Caco-2 (cell line): ENCODE measurements at regions of chr11 and their contacts with region 1.

Region 1: DNA sequence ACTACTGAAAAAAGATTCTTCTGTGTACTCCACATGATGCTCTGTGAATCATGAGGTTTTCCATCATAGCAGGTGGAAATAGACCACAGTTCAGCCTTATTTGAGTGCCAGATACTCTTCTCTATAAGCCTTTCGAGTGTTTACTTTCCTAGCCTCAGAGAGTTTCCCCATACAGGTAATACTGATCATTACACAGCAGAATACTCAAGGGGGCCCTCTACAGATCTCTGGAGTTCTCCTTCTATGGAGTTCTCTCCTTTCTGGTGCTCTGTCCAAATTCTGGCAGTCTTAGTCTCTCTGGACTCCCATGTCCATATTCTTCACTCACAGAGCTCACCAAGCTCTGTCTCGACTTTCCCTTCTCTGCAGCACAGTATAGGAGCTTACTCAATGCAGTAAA is 175.7 kb upstream of the CARD18 start:
- DNase-seq: peak in 1 of 2 experiments; percentile 39
- H3K4me3 ChIP-seq: no peak overlapping the region
- H3K4me3 Mint-ChIP-seq: no peak overlapping the region
- H3K27ac Mint-ChIP-seq: no peak overlapping the region
- H3K4me1 ChIP-seq: no peaks in the 10 kb centered on the region
- H3K4me1 Mint-ChIP-seq: no peaks in the 10 kb centered on the region
- H3K27me3 ChIP-seq: no peaks in the 10 kb centered on the region
- H3K27me3 Mint-ChIP-seq: no peaks in the 10 kb centered on the region
- CTCF ChIP-seq: peak in 1 of 2 experiments; percentile 58

Region 2: GRCh38 chr11:104946907-104947306 is 368.4 kb before region 1 on chr11:
- CTCF ChIA-PET with region 1: no interaction called
- POLR2A ChIA-PET with region 1: no interaction called
- intact Hi-C with region 1: loop called (anchors 1 kb)
- DNase-seq: peak in 1 of 2 experiments; percentile 72
- H3K4me3 ChIP-seq: no peak overlapping the region
- H3K4me3 Mint-ChIP-seq: no peak overlapping the region
- H3K27ac Mint-ChIP-seq: no peak overlapping the region
- H3K4me1 ChIP-seq: no peaks in the 10 kb centered on the region
- H3K4me1 Mint-ChIP-seq: peaks cover 6% of the 10 kb centered on the region
- H3K27me3 ChIP-seq: no peaks in the 10 kb centered on the region
- H3K27me3 Mint-ChIP-seq: no peaks in the 10 kb centered on the region
- CTCF ChIP-seq: peak; percentile 54 to 74

Region 3: GRCh38 chr11:105334025-105334710 is 18.9 kb after region 1 on chr11:
- CTCF ChIA-PET with region 1: no interaction called
- POLR2A ChIA-PET with region 1: no interaction called
- intact Hi-C with region 1: no loop called
- DNase-seq: no peak
- H3K4me3 ChIP-seq: no peak overlapping the region
- H3K4me3 Mint-ChIP-seq: no peak overlapping the region
- H3K27ac Mint-ChIP-seq: no peak overlapping the region
- H3K4me1 ChIP-seq: no peaks in the 10 kb centered on the region
- H3K4me1 Mint-ChIP-seq: no peaks in the 10 kb centered on the region
- H3K27me3 ChIP-seq: no peaks in the 10 kb centered on the region
- H3K27me3 Mint-ChIP-seq: no peaks in the 10 kb centered on the region
- CTCF ChIP-seq: no peak

Region 4: GRCh38 chr11:105577641-105578040 is 262.4 kb after region 1 on chr11:
- CTCF ChIA-PET with region 1: no interaction called
- POLR2A ChIA-PET with region 1: no interaction called
- intact Hi-C with region 1: loop called (anchors 10 kb)
- DNase-seq: peak in 1 of 2 experiments; percentile 38
- H3K4me3 ChIP-seq: no peak overlapping the region
- H3K4me3 Mint-ChIP-seq: no peak overlapping the region
- H3K27ac Mint-ChIP-seq: no peak overlapping the region
- H3K4me1 ChIP-seq: no peaks in the 10 kb centered on the region
- H3K4me1 Mint-ChIP-seq: no peaks in the 10 kb centered on the region
- H3K27me3 ChIP-seq: no peaks in the 10 kb centered on the region; the same call in 1 of the 2 replicates
- H3K27me3 Mint-ChIP-seq: no peaks in the 10 kb centered on the region
- CTCF ChIP-seq: peak; percentile 42 to 59